Breast epithelium (tissue), 4 donors: ENCODE measurements at regions of chr5 and their contacts with region 1.

Region 1: DNA sequence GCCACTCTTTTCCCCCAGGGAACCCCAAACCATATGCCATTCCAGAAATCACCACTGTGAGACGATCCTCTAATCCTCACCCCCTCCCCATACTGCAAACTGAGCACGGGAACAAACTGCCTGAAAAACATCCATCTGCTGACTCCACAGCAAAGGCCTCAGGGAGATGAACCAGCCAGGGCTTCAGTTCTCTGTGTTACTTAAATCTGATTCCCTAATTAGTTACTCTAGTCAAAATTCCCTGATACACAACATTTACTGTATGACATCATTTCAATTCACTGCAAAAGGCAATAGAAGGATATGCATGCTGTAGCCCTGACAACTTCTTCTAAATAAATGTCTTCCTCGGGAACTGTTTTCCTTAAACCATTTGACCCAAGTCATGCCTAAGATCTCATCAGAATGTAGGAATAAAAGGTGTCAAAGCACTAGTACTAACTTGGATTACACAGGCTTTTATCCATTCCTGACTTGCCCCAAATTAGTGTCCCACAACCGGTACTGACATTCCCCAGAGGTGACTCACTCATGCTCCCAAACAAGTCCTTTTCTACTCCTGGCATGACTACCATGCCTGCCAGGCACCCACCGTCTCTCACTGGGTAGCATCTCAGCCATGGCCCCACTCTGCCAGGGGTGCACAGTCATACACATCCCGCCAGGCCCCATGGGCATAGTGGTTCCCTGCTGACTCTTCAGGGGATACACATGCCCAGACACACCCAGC is 35.0 kb downstream of the MTX3 start:
- DNase-seq: no peak
- H3K4me3 ChIP-seq: no peak overlapping the region
- H3K27ac ChIP-seq: no peak overlapping the region
- H3K4me1 ChIP-seq: no peaks in the 10 kb centered on the region
- H3K27me3 ChIP-seq: no peaks in the 10 kb centered on the region
- CTCF ChIP-seq: no peak
- POLR2A ChIP-seq: no peak

Region 2: GRCh38 chr5:79357398-79357797 is 598.7 kb before region 1 on chr5:
- intact Hi-C with region 1: no loop called
- DNase-seq: no peak
- H3K4me3 ChIP-seq: no peak overlapping the region
- H3K27ac ChIP-seq: no peak overlapping the region
- H3K4me1 ChIP-seq: no peaks in the 10 kb centered on the region
- H3K27me3 ChIP-seq: no peaks in the 10 kb centered on the region
- CTCF ChIP-seq: no peak
- POLR2A ChIP-seq: no peak

Region 3: GRCh38 chr5:80720181-80720580 is 764.1 kb after region 1 on chr5:
- intact Hi-C with region 1: loop called (anchors 10 kb)
- DNase-seq: no peak
- H3K4me3 ChIP-seq: no peak overlapping the region
- H3K27ac ChIP-seq: no peak overlapping the region
- H3K4me1 ChIP-seq: no peaks in the 10 kb centered on the region
- H3K27me3 ChIP-seq: no peaks in the 10 kb centered on the region
- CTCF ChIP-seq: no peak
- POLR2A ChIP-seq: no peak

Region 4: GRCh38 chr5:80781356-80781755 is 825.2 kb after region 1 on chr5:
- intact Hi-C with region 1: no loop called
- DNase-seq: no peak
- H3K4me3 ChIP-seq: no peak overlapping the region
- H3K27ac ChIP-seq: no peak overlapping the region
- H3K4me1 ChIP-seq: no peaks in the 10 kb centered on the region
- H3K27me3 ChIP-seq: no peaks in the 10 kb centered on the region
- CTCF ChIP-seq: no peak
- POLR2A ChIP-seq: no peak